ENCODE measurements at regions of chr15 and their contacts with region 1.

Region 1: DNA sequence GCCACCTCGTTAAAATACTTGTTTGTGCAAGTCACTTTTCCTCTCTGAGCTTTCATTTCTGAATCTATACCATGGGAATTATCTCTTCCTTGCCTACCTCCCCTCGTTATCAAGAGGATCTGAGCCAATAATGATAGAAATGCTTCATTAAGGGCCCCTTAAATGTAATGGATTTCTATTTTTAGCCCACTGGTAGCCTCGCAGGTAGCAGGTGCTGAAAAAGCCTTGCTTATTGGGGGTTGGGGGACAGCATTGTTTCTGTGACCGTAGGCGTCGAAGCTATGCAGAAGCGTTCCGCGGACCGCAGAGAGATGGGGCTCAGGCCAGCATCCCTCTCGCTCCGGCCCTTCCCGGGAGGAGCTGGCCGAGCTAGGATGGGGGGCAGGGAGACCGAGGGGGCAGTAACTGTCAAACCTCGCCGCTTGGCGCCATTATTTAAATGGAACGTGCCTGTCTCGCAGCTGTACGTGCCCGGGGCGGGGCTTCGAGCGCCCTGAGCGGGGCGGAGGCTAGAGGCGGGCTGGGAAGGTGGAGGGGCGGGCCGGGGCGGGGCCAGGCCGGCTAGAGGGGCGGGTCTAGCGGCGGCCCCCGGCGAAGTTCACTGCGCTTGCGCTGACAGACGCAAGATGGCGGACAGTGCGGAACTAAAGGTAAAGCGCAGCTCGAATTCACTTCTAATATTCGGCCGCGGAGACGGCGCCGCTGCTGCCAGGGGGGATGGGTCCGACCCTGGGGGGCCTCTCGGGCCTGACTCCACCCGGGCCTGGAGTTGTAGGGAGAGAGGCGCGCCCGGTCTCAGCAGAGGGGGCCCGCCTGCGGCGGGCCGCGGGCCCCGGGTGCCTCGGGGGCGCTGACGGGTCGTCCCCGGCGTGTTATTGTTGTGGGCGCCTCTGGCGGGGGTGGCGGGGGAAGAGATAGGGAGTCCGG is at the start of gene PIAS1:
- DNase-seq: peak; percentile 95
- H3K4me3 Mint-ChIP-seq: peak within 1 kb of the TSS; percentile 93
- H3K27ac Mint-ChIP-seq: peak within 1 kb of the TSS; percentile 85
- H3K4me1 Mint-ChIP-seq: peaks cover 51% of the 10 kb centered on the region
- H3K27me3 Mint-ChIP-seq: peaks cover 8% of the 10 kb centered on the region
- total RNA-seq, gene PIAS1: 39.1 to 43.4 TPM

Region 2: GRCh38 chr15:67976506-67977073 is 77.4 kb before region 1 on chr15:
- CTCF ChIA-PET with region 1: no interaction called
- POLR2A ChIA-PET with region 1: no interaction called
- DNase-seq: no peak
- H3K4me3 Mint-ChIP-seq: no peak overlapping the region
- H3K27ac Mint-ChIP-seq: no peak overlapping the region
- H3K4me1 Mint-ChIP-seq: no peaks in the 10 kb centered on the region
- H3K27me3 Mint-ChIP-seq: peaks cover 14% of the 10 kb centered on the region

Region 3: GRCh38 chr15:68034081-68034480 is 19.9 kb before region 1 on chr15:
- CTCF ChIA-PET with region 1: no interaction called
- POLR2A ChIA-PET with region 1: no interaction called
- DNase-seq: no peak
- H3K4me3 Mint-ChIP-seq: no peak overlapping the region
- H3K27ac Mint-ChIP-seq: no peak overlapping the region
- H3K4me1 Mint-ChIP-seq: no peaks in the 10 kb centered on the region
- H3K27me3 Mint-ChIP-seq: peaks cover 40% of the 10 kb centered on the region

Region 4: DNA sequence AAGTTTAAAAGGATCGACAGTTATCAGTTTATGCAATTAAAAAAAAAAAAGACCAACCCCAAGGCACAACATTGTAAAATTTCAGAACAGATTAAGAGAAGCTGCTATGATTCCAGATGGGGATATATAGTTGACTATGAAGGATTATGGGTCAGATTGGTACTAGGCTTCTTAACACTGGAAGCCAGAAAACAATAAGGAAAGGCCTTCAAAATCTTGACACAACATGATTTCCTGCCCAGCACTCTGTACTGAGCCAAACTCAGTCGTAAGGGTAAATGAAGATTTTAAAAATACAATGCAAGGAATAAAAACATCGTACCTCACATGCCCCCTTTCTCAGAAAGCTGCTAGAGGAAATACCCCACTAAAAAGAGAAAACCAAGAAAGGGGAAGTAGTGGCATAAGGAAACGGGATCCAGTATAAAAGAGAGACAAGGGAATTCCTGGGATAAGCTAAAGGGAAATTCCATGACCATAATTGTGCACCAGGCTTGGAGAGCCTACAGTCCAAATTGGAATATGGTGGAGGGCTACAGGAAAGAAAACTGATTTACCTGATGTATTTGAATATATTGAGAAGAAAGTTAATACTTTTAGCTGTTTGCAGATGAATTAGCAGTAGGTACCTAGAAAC is 28.0 kb after region 1 on chr15:
- CTCF ChIA-PET with region 1: no interaction called
- POLR2A ChIA-PET with region 1: interaction called, 10 read pairs
- DNase-seq: no peak
- H3K4me3 Mint-ChIP-seq: no peak overlapping the region
- H3K27ac Mint-ChIP-seq: no peak overlapping the region
- H3K4me1 Mint-ChIP-seq: peaks cover 4% of the 10 kb centered on the region
- H3K27me3 Mint-ChIP-seq: no peaks in the 10 kb centered on the region

Region 5: DNA sequence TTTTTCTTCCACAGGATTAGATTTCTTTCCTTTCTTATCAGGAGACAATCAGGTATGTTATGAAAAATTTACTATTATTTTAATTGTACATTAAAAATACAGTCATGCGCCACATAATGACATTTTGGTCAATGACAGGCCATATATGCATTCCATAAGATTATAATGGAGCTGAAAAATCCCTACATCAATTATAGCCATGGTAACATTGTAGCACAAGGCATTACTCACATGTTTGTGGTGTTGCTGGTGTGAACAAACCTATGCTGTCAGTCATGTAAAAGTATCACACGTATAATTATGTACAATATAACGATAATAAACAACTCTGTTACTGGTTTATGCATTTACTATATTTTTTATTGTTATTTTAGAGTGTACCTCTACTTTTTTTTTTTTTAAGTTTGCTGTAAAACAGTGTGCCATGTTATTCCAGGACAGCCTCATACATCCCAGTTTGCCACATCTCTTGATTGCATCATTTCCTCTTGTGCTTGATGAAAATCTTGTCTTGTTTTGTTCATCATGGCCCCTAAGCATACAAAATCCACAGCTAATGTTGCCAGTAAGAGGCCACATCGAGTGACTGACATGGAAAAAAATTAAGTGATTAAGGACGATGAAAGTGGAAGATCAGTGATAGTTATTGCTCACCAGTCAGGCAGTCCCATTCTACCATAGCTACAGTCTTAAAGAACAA is 129.8 kb after region 1 on chr15:
- CTCF ChIA-PET with region 1: no interaction called
- POLR2A ChIA-PET with region 1: interaction called, 11 read pairs
- DNase-seq: no peak
- H3K4me3 Mint-ChIP-seq: no peak overlapping the region
- H3K27ac Mint-ChIP-seq: peak overlapping the region; percentile 60
- H3K4me1 Mint-ChIP-seq: peaks cover 6% of the 10 kb centered on the region
- H3K27me3 Mint-ChIP-seq: no peaks in the 10 kb centered on the region

Region 6: DNA sequence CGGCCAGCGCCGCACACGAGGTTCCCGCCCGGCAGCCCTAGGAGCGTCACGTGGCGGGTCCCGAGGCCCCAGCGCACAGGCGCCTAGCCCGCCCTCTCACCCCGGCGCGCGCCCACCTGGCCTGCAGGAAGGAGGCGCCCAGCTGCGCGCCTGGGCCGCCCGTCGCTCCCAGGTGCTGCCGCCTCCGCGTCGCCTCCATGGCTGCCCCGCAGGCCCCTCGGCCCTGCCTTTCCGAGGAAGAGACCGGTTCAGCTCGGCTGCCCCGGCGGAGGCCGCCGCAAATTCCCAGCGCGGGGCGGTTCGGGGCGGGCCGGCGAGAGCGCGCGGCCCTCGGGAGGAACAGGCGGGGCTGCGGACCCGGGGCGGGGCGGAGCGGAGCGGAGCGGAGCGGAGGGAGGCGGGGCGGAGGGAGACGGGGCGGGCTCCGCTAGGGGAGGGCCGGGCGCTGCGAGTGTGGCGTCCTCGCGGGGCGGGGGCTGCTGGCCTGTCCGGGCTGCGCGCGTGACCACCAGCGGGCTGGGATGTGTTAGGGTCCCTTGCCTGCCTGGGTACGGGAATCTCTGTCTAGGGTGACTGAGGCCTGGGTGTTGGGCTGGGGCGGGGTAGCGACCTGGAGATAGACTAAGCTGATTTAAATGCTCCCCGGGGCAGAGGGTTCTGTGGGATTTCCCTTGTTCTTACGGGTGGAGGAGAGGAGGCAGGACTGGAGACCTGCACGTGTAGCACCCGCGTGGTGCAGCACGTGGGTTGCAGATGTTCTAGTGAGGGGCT is 175.6 kb after region 1 on chr15 and contains the start of gene CLN6:
- CTCF ChIA-PET with region 1: no interaction called
- POLR2A ChIA-PET with region 1: interaction called, 30 read pairs
- DNase-seq: peak; percentile 83
- H3K4me3 Mint-ChIP-seq: peak within 1 kb of the TSS; percentile 93
- H3K27ac Mint-ChIP-seq: peak within 1 kb of the TSS; percentile 74
- H3K4me1 Mint-ChIP-seq: peaks cover 39% of the 10 kb centered on the region
- H3K27me3 Mint-ChIP-seq: no peaks in the 10 kb centered on the region
- total RNA-seq, gene CLN6: 40.0 to 41.3 TPM

Region 7: DNA sequence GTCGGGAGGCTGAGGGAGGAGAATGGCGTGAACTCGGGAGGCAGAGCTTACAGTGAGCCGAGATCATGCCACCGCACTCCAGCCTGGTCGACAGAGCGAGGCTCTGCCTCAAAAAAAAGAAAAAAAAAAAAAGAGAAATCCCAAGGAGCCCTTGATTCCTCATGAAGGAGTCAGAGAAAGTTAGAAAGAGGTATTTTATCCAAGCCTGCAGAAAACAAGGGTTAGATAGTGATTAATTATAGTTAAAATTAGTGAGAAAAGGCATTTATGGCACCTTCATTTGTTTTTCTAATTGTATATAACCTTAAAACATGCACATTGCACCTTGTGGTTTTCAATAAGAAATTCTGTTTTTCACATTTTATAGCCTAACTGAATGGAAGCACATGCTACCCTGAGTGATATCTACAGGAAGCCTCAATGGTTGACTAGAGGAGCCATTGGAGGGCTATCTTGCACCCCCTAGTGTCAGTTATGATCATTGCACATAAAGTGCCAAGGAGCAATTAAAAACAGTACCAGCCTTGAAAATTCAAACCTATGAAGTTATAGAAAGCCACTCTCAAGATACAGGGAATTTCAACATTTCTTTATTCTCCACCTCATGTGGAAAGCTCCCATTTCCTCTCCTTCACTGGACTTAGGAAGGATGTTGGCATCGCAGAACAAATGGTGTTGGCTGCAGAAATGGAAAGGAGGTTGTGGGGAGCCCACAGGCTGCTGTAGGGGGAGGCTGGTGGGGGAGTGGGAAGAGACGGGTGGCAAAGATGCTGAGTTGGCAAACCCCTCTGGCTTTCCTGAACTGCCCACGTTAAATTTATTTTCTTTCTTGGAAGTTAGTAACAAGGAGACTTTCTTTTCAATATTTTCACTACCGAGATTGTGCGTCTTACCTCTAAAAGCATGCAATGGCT is 329.5 kb after region 1 on chr15:
- CTCF ChIA-PET with region 1: no interaction called
- POLR2A ChIA-PET with region 1: no interaction called
- DNase-seq: peak; percentile 50
- H3K4me3 Mint-ChIP-seq: no peak overlapping the region
- H3K27ac Mint-ChIP-seq: no peak overlapping the region
- H3K4me1 Mint-ChIP-seq: peaks cover 17% of the 10 kb centered on the region
- H3K27me3 Mint-ChIP-seq: peaks cover 4% of the 10 kb centered on the region

Measured in activated CD4-positive, alpha-beta memory T cell treated with anti-CD3 and anti-CD28 coated beads, Interleukin-2, amount 10 ng/mL, durations not matched to agents 7 days and 5 days (primary cell).